SK-N-SH (cell line): ENCODE measurements at regions of chr15 and their contacts with region 1.

Region 1: DNA sequence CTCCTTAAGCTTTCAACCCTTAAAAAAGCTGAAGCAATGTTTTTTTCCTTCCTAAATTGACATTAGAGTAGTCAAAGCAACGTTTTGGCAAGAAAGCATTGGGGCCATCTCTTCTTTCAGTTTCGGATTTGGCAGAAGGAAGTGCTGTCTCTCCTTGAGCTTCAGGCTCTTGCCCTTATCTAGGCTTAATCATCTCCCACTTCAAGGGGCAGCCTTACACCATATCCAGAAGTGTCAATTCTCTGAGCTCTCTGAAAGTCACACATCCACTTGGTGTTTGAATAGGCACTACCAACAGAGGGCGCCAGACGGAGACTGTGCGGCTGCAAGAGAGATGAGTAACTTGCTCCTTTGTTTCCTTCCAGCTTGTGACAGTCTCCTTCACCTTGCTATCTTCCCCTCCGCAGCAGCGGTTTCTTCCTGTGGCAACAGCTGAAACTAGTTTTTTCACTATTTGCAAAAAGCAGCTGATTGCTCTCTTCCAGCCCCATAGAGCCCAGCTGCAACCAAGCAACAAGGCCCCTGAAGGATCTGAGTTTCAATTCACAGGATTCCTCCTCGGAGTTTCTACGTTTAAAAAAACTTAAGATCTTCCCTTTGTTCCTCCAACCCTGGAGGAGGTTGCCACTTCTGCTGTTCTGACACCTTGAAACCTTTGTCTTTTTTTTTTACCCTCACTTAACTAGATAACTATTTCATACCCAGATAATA is 147.0 kb upstream of the SLCO3A1 start:
- DNase-seq: peak; percentile 48
- H3K4me3 ChIP-seq: peak overlapping the region in 1 of 2 experiments; percentile 19; a peak in 1 of 4 replicates
- H3K27ac ChIP-seq: no peak overlapping the region
- H3K4me1 ChIP-seq: no peaks in the 10 kb centered on the region
- H3K27me3 ChIP-seq: no peaks in the 10 kb centered on the region
- CTCF ChIP-seq: peak; percentile 89
- EP300 ChIP-seq: no peak
- RAD21 ChIP-seq: peak; percentile 74

Region 2: GRCh38 chr15:91465696-91466095 is 240.8 kb before region 1 on chr15:
- CTCF ChIA-PET with region 1: no interaction called
- POLR2A ChIA-PET with region 1: no interaction called
- DNase-seq: no peak
- H3K4me3 ChIP-seq: no peak overlapping the region
- H3K27ac ChIP-seq: no peak overlapping the region
- H3K4me1 ChIP-seq: peaks cover 0 to 6% of the 10 kb centered on the region in 2 experiments; a peak in 1 of 4 replicates
- H3K27me3 ChIP-seq: no peaks in the 10 kb centered on the region
- CTCF ChIP-seq: no peak
- EP300 ChIP-seq: no peak
- RAD21 ChIP-seq: no peak

Region 3: GRCh38 chr15:91627473-91628278 is 78.8 kb before region 1 on chr15:
- CTCF ChIA-PET with region 1: interaction called, 10 read pairs
- POLR2A ChIA-PET with region 1: no interaction called
- DNase-seq: peak; percentile 47
- H3K4me3 ChIP-seq: no peak overlapping the region
- H3K27ac ChIP-seq: no peak overlapping the region
- H3K4me1 ChIP-seq: peaks cover 0 to 17% of the 10 kb centered on the region in 2 experiments; a peak in 2 of 4 replicates
- H3K27me3 ChIP-seq: no peaks in the 10 kb centered on the region
- CTCF ChIP-seq: no peak
- EP300 ChIP-seq: peak in 1 of 2 experiments; percentile 46; a peak in 1 of 4 replicates
- RAD21 ChIP-seq: no peak

Region 4: GRCh38 chr15:91694831-91695210 is 11.7 kb before region 1 on chr15:
- CTCF ChIA-PET with region 1: interaction called, 76 read pairs
- POLR2A ChIA-PET with region 1: no interaction called
- DNase-seq: peak; percentile 5
- H3K4me3 ChIP-seq: no peak overlapping the region
- H3K27ac ChIP-seq: peak overlapping the region; percentile 54 to 55; a peak in 3 of 4 replicates
- H3K4me1 ChIP-seq: peaks cover 5 to 8% of the 10 kb centered on the region in 2 experiments; a peak in 2 of 4 replicates
- H3K27me3 ChIP-seq: no peaks in the 10 kb centered on the region
- CTCF ChIP-seq: no peak
- EP300 ChIP-seq: no peak
- RAD21 ChIP-seq: no peak

Region 5: GRCh38 chr15:91723959-91724358 is 17.5 kb after region 1 on chr15:
- CTCF ChIA-PET with region 1: interaction called, 19 read pairs
- POLR2A ChIA-PET with region 1: no interaction called
- DNase-seq: no peak
- H3K4me3 ChIP-seq: no peak overlapping the region
- H3K27ac ChIP-seq: no peak overlapping the region
- H3K4me1 ChIP-seq: no peaks in the 10 kb centered on the region
- H3K27me3 ChIP-seq: no peaks in the 10 kb centered on the region; the same call in 1 of the 2 replicates
- CTCF ChIP-seq: no peak
- EP300 ChIP-seq: no peak
- RAD21 ChIP-seq: no peak

Region 6: GRCh38 chr15:91737151-91737818 is 30.8 kb after region 1 on chr15:
- CTCF ChIA-PET with region 1: interaction called, 19 read pairs
- POLR2A ChIA-PET with region 1: no interaction called
- DNase-seq: peak; percentile 21
- H3K4me3 ChIP-seq: no peak overlapping the region
- H3K27ac ChIP-seq: no peak overlapping the region
- H3K4me1 ChIP-seq: peaks cover 0 to 10% of the 10 kb centered on the region in 2 experiments; a peak in 2 of 4 replicates
- H3K27me3 ChIP-seq: no peaks in the 10 kb centered on the region
- CTCF ChIP-seq: no peak
- EP300 ChIP-seq: no peak
- RAD21 ChIP-seq: no peak

Region 7: GRCh38 chr15:91852741-91853510 is 146.4 kb after region 1 on chr15:
- CTCF ChIA-PET with region 1: interaction called, 26 read pairs
- POLR2A ChIA-PET with region 1: no interaction called
- DNase-seq: peak; percentile 91
- H3K4me3 ChIP-seq: peak overlapping the region; percentile 80 to 93
- H3K27ac ChIP-seq: peak overlapping the region; percentile 73 to 81
- H3K4me1 ChIP-seq: peaks cover 19 to 20% of the 10 kb centered on the region in 2 experiments
- H3K27me3 ChIP-seq: no peaks in the 10 kb centered on the region
- CTCF ChIP-seq: peak; percentile 76
- EP300 ChIP-seq: no peak
- RAD21 ChIP-seq: peak; percentile 66